ENCODE measurements at regions of chr20 and their contacts with region 1.

Region 1: GRCh38 chr20:47334022-47334551 is 22.4 kb downstream of the ZMYND8 start:
- DNase-seq: peak; percentile 90
- ATAC-seq: peak; percentile 78
- H3K4me3 ChIP-seq: peak overlapping the region; percentile 6 to 30; a peak in 3 of 4 replicates
- H3K27ac ChIP-seq: peak overlapping the region; percentile 99
- H3K4me1 ChIP-seq: peaks cover 84% of the 10 kb centered on the region
- H3K27me3 ChIP-seq: no peaks in the 10 kb centered on the region
- CTCF ChIP-seq: no peak

Region 2: GRCh38 chr20:45459606-45460005 is 1874.5 kb before region 1 on chr20:
- CTCF ChIA-PET with region 1: no interaction called
- POLR2A ChIA-PET with region 1: no interaction called
- in situ Hi-C with region 1: no loop called
- intact Hi-C with region 1: no loop called
- DNase-seq: no peak
- ATAC-seq: no peak
- H3K4me3 ChIP-seq: no peak overlapping the region
- H3K27ac ChIP-seq: no peak overlapping the region
- H3K4me1 ChIP-seq: no peaks in the 10 kb centered on the region
- H3K27me3 ChIP-seq: peaks cover 17% of the 10 kb centered on the region; the same call in 1 of the 2 replicates
- CTCF ChIP-seq: peak; percentile 37; the same call in 1 of the 2 replicates

Region 3: GRCh38 chr20:47272893-47273590 is 61.0 kb before region 1 on chr20:
- CTCF ChIA-PET with region 1: no interaction called
- POLR2A ChIA-PET with region 1: interaction called, 4 read pairs
- in situ Hi-C with region 1: no loop called
- intact Hi-C with region 1: loop called (anchors 10 kb)
- DNase-seq: peak; percentile 67
- ATAC-seq: peak; percentile 68
- H3K4me3 ChIP-seq: no peak overlapping the region
- H3K27ac ChIP-seq: peak overlapping the region; percentile 97
- H3K4me1 ChIP-seq: peaks cover 48% of the 10 kb centered on the region
- H3K27me3 ChIP-seq: no peaks in the 10 kb centered on the region
- CTCF ChIP-seq: peak; percentile 86

Region 4: GRCh38 chr20:47317127-47317895 is 16.8 kb before region 1 on chr20:
- CTCF ChIA-PET with region 1: no interaction called
- POLR2A ChIA-PET with region 1: interaction called, 10 read pairs
- in situ Hi-C with region 1: no loop called
- intact Hi-C with region 1: no loop called
- DNase-seq: peak; percentile 80
- ATAC-seq: peak; percentile 68
- H3K4me3 ChIP-seq: no peak overlapping the region
- H3K27ac ChIP-seq: peak overlapping the region; percentile 99
- H3K4me1 ChIP-seq: peaks cover 81% of the 10 kb centered on the region
- H3K27me3 ChIP-seq: no peaks in the 10 kb centered on the region
- CTCF ChIP-seq: no peak

Measured in Panc1 (cell line).